SK-N-SH (cell line): ENCODE measurements at regions of chr6 and their contacts with region 1.

Region 1: DNA sequence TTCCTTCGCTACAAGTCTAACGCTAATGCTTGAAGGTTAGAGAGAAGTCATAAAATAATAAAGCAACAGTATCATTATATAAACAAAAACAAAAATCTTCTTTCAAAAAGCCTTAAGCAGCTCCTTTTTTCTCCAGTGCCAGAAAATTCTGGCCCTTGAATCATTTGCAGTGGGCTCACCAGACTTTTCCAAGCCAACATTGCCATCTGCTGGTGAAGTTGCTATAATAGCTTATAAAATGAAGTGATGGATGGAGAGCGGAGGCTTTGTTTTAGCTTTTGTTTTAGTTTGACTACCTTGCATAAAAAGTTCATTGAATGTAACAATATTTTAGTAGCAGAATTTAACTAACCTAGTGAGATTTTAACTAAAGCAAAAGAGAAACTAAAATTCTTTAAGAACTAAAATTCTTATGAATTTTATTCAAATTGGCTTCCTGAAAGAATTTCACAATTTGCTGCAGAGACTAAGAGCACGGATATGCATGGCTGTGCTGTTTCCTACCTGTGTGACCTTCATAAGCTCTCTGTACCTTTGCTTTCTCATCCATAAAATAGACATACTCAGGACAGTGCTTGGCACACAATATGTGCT is 44.8 kb upstream of the SLC2A12 start:
- DNase-seq: peak; percentile 69
- H3K4me3 ChIP-seq: no peak overlapping the region; a peak in 1 of 4 replicates
- H3K27ac ChIP-seq: no peak overlapping the region
- H3K4me1 ChIP-seq: peaks cover 0 to 11% of the 10 kb centered on the region in 2 experiments; a peak in 2 of 4 replicates
- H3K27me3 ChIP-seq: peaks cover 10% of the 10 kb centered on the region; the same call in 1 of the 2 replicates
- CTCF ChIP-seq: peak; percentile 81
- EP300 ChIP-seq: no peak
- RAD21 ChIP-seq: peak; percentile 95

Region 2: DNA sequence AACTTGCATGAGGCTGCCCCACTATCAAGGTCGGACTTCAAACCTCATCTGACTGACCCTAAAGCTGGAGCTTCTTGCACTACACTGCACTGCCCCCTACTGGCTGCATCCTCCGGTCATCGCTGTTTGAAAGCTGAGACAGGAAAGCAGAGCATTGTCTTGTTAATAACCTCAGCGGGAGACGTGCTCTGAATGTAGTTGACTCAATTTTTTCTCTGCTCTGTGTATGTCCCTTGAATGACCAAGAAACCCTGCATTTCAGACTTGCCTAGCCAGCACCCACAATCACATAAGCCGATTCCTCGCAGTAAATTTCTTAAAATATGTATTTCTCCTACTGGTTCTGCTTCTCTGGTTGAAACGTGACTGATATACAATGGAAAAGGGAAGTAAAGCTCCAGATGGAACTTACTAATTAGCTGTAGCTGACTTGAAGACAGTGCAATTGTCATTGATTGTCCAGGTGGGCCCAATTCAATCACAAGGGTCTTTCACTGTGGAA is 180.5 kb before region 1 on chr6:
- CTCF ChIA-PET with region 1: interaction called, 484 read pairs
- POLR2A ChIA-PET with region 1: no interaction called
- DNase-seq: peak; percentile 60
- H3K4me3 ChIP-seq: no peak overlapping the region; a peak in 1 of 4 replicates
- H3K27ac ChIP-seq: no peak overlapping the region
- H3K4me1 ChIP-seq: peaks cover 0 to 2% of the 10 kb centered on the region in 2 experiments; a peak in 1 of 4 replicates
- H3K27me3 ChIP-seq: peaks cover 5% of the 10 kb centered on the region
- CTCF ChIP-seq: peak; percentile 94
- EP300 ChIP-seq: no peak
- RAD21 ChIP-seq: peak; percentile 88

Region 3: DNA sequence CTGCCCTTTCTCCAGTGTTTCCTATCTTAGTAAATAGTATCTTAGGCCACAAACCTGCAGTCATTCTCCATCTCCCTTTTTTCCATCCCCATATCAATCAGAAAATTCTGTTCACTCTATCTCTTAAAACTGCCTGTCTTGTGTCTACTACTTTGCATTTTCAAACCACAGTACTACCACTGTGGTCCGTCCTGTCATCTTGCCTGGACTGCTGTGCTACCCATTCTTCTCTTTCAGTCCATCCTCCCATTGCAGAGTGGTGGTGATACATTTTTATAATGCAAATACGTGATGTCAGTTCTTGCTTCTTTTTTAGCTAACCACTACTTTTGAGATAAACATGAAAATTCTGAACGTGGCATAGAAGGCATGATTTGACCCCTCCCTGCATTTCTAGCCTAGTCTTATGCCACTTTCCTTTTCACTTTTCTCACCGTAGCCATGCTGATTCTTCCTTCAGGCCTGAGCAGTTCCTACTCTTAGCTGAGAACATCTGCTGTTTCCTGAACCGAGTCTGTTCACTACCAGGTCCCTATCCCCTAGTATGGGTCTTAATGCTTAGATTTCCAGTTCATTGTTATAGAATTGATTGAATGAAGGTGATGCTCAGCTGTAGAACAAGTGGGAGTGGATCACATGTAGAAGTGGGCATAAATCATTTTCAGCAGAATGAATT is 130.4 kb before region 1 on chr6:
- CTCF ChIA-PET with region 1: interaction called, 11 read pairs
- POLR2A ChIA-PET with region 1: no interaction called
- DNase-seq: no peak
- H3K4me3 ChIP-seq: no peak overlapping the region
- H3K27ac ChIP-seq: no peak overlapping the region
- H3K4me1 ChIP-seq: peaks cover 6 to 8% of the 10 kb centered on the region in 2 experiments; a peak in 3 of 4 replicates
- H3K27me3 ChIP-seq: no peaks in the 10 kb centered on the region
- CTCF ChIP-seq: no peak
- EP300 ChIP-seq: no peak
- RAD21 ChIP-seq: no peak

Region 4: GRCh38 chr6:134074151-134075055 is 22.8 kb before region 1 on chr6:
- CTCF ChIA-PET with region 1: interaction called, 10 read pairs
- POLR2A ChIA-PET with region 1: no interaction called
- DNase-seq: no peak
- H3K4me3 ChIP-seq: no peak overlapping the region
- H3K27ac ChIP-seq: no peak overlapping the region
- H3K4me1 ChIP-seq: no peaks in the 10 kb centered on the region; a peak in 1 of 4 replicates
- H3K27me3 ChIP-seq: no peaks in the 10 kb centered on the region; the same call in 1 of the 2 replicates
- CTCF ChIP-seq: no peak
- EP300 ChIP-seq: no peak
- RAD21 ChIP-seq: no peak

Region 5: DNA sequence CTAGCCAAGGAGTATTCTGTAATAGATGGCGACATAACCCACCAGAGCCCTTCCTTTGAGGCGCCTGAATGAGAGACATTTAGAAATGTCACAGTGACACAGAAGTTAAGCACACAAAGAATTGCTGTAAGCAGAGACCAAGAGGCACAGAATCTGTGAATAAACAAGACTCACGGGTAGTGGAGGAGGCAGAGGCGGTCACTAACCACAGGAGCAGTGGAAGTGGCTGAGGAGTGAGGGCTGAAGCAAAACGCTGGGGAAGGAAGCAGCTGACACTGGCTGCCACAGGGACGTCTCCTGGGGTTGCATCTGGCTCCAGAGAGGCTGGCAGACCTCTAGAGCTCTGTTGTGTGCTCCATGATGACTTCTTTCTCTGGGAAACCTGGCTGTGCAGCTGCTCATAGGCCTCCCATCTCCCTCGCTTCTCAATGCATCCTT is 20.2 kb after region 1 on chr6:
- CTCF ChIA-PET with region 1: interaction called, 31 read pairs
- POLR2A ChIA-PET with region 1: no interaction called
- DNase-seq: peak; percentile 19
- H3K4me3 ChIP-seq: no peak overlapping the region
- H3K27ac ChIP-seq: no peak overlapping the region
- H3K4me1 ChIP-seq: peaks cover 0 to 3% of the 10 kb centered on the region in 2 experiments; a peak in 1 of 4 replicates
- H3K27me3 ChIP-seq: no peaks in the 10 kb centered on the region
- CTCF ChIP-seq: no peak
- EP300 ChIP-seq: no peak
- RAD21 ChIP-seq: no peak

Region 6: GRCh38 chr6:134183844-134184243 is 86.6 kb after region 1 on chr6:
- CTCF ChIA-PET with region 1: no interaction called
- POLR2A ChIA-PET with region 1: no interaction called
- DNase-seq: no peak
- H3K4me3 ChIP-seq: no peak overlapping the region
- H3K27ac ChIP-seq: no peak overlapping the region
- H3K4me1 ChIP-seq: no peaks in the 10 kb centered on the region
- H3K27me3 ChIP-seq: no peaks in the 10 kb centered on the region
- CTCF ChIP-seq: no peak
- EP300 ChIP-seq: no peak
- RAD21 ChIP-seq: no peak